Mammary epithelial cell (primary cell): ENCODE measurements at regions of chr20 and their contacts with region 1.

Region 1: DNA sequence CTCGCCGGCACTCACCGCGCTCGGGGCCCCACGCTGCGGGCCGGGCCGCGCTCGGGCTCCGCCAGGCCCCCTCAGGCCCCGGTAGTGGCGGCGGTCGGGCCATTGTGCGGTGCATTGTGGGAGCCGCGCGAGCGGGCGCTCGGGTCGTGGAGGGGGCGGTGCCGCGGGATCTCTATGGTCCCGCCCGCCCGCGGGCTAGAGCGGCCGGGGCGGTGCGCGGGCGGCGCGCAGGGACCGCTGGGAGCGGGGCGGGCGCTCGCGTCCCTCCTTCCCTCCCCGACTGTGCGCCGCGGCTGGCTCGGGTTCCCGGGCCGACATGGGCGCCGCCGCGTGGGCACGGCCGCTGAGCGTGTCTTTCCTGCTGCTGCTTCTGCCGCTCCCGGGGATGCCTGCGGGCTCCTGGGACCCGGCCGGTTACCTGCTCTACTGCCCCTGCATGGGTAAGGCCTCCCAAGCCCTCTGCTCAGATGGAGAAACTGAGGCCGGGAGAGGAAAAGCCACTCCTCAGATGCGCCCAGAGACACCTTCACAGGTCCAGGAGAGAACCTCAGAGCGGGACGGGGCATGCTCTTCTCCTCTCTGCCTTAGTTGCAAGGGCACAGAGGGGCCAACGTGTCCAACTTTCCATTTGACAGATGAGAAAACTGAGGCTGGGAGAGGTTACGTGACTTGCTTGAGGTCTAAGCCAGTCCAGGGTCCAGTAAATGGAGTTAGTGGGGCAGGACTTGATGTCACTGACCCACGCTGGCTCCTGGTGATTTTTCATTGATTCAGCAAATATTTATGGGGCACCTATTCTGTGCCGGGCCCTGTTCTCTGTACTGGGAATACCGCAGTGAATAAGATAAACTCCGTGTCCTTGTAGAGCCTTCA is at the starts of genes PLAGL2 and POFUT1:
- DNase-seq: peak; percentile 87
- H3K4me3 ChIP-seq: peak within 1 kb of the TSS; percentile 84 to 100 (median 88)
- H3K27ac ChIP-seq: peak within 1 kb of the TSS; percentile 97
- H3K4me1 ChIP-seq: peaks cover 44% of the 10 kb centered on the region
- H3K27me3 ChIP-seq: no peaks in the 10 kb centered on the region
- CTCF ChIP-seq: peak in 1 of 2 donors; percentile 27
- total RNA-seq, gene PLAGL2: 6.3 to 17.2 TPM
- total RNA-seq, gene POFUT1: 36.7 to 43.5 TPM

Region 2: DNA sequence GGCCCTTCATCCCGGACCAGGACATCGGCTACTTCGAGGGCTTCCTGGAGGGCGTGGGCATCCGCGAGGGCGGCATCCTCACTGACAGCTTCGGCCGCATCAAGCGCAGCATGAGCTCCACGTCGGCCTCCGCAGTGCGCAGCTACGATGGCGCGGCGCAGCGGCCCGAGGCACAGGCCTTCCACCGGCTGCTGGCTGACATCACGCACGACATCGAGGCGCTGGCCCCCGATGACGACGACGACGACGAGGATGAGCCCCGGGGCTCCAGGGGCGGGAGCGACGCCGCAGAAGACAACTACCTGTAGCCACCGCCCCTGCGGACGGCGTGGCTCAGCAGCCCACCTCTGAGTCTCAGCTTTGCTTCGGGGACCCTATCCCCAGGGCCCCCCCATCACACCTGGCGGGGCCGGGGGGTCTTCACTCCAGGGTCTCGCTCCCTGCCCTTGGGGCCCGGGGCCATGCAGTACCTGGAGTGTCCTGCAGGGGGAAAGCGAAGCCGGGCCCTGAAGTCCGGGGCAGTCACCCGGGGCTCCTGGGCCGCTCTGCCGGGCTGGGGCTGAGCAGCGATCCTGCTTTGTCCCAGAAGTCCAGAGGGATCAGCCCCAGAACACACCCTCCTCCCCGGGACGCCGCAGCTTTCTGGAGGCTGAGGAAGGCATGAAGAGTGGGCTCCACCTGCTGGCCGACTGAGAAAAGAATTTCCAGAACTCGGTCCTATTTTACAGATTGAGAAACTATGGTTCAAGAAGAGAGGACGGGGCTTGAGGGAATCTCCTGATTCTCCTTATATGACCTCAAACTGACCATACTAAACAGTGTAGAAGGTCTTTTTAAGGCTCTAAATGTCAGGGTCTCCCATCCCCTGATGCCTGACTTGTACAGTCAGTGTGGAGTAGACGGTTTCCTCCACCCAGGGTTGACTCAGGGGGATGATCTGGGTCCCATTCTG is 176.6 kb before region 1 on chr20:
- CTCF ChIA-PET with region 1: no interaction called
- dilution Hi-C with region 1: no loop called
- in situ Hi-C with region 1: no loop called
- intact Hi-C with region 1: loop called (anchors 10 kb)
- DNase-seq: peak; percentile 66
- H3K4me3 ChIP-seq: peak overlapping the region in 1 of 3 experiments; percentile 23
- H3K27ac ChIP-seq: no peak overlapping the region
- H3K4me1 ChIP-seq: peaks cover 5% of the 10 kb centered on the region
- H3K27me3 ChIP-seq: peaks cover 3% of the 10 kb centered on the region
- CTCF ChIP-seq: peak; percentile 72 to 88

Region 3: DNA sequence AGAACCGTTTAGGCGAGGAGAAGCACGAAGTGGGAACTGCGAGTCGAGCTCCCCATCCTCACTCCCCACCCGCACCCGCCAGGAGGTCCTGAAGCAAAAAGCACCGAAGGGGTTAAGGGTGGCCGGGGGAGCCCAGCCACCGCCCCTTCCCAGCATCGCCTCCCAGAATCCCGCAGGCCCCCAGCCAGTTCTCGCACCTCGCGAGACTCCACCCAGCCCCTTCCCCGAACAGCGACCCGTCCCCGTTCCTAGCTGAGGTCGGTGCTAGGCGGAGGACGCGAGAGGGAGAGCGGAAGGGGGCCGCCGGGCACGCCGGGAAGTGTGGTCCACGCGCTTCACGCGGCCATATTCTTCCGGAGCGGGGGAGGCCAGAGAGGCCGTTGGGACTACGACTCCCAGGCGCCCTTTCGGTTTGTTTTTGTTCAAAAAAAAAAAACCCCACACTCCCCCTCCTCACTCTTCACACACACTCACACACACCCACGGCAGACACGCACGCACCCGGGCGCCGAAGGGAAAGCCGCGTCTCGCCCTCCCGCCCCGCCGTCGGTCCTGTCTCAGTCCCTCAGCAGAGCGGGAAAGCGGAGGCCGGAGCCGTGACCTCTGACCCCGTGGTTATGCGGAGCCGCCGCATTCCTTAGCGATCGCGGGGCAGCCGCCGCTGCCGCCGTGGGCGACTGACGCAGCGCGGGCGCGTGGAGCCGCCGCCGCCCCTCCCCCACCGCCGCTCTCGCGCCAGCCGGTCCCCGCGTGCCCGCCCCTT is 150.2 kb after region 1 on chr20 and contains the start of gene ASXL1:
- CTCF ChIA-PET with region 1: no interaction called
- dilution Hi-C with region 1: no loop called
- in situ Hi-C with region 1: no loop called
- intact Hi-C with region 1: loop called (anchors 1 kb)
- DNase-seq: peak; percentile 91
- H3K4me3 ChIP-seq: peak within 1 kb of the TSS; percentile 61 to 70 (median 64)
- H3K27ac ChIP-seq: peak within 1 kb of the TSS; percentile 76
- H3K4me1 ChIP-seq: peaks cover 38% of the 10 kb centered on the region
- H3K27me3 ChIP-seq: no peaks in the 10 kb centered on the region
- CTCF ChIP-seq: no peak
- total RNA-seq, gene ASXL1: 37.2 to 60.1 TPM

Region 4: GRCh38 chr20:32456869-32457478 is 249.1 kb after region 1 on chr20:
- CTCF ChIA-PET with region 1: no interaction called
- dilution Hi-C with region 1: no loop called
- in situ Hi-C with region 1: loop called in 1 of 2 experiments (anchors 25 kb)
- intact Hi-C with region 1: no loop called
- DNase-seq: no peak
- H3K4me3 ChIP-seq: peak overlapping the region in 2 of 3 experiments; percentile 31
- H3K27ac ChIP-seq: no peak overlapping the region
- H3K4me1 ChIP-seq: peaks cover 9% of the 10 kb centered on the region
- H3K27me3 ChIP-seq: no peaks in the 10 kb centered on the region
- CTCF ChIP-seq: peak; percentile 38 to 60

Region 5: DNA sequence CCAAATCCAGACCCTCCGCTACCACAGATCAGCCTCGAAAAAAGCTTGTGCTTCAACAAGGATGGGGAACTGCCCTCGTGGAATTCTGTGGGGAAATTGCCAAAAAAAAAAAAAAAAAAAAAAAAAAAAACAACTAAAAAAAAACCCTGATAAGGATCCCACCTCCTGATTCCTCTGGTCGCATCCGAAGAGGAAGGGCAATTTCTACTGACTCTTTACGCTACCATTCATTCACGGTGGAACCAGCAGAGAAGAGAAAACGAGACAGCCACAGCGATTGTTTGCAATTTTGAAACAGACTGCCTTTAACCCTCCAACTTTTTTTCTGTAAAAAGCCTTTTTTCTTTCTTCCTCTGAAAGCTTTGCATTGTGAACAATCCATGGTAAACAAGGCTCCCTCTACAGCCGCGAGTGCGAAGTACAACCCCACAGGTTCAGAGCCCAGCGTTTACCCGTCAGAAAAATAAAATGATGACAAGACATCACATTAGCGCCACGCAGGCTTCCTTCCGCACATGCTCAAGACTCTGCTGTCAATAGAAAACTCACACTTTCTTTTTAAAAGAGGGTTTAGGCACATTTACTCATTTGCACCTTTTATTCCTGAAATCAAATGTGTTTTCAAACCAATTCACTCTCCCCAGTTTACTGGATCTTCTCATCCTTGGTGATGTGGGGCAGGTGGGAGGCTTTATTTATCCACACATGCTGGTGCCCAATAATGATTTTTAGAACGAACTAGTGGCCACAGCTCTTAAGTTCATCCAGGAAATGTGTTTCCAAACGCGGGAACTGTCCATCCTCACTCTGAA is 277.3 kb after region 1 on chr20:
- CTCF ChIA-PET with region 1: no interaction called
- dilution Hi-C with region 1: no loop called
- in situ Hi-C with region 1: no loop called
- intact Hi-C with region 1: loop called (anchors 2 kb)
- DNase-seq: peak; percentile 60
- H3K4me3 ChIP-seq: peak overlapping the region; percentile 51 to 63 (median 52)
- H3K27ac ChIP-seq: no peak overlapping the region
- H3K4me1 ChIP-seq: peaks cover 14% of the 10 kb centered on the region
- H3K27me3 ChIP-seq: no peaks in the 10 kb centered on the region
- CTCF ChIP-seq: peak; percentile 64 to 77